AG04450 (cell line): ENCODE measurements at regions of chr5 and their contacts with region 1.

Region 1: DNA sequence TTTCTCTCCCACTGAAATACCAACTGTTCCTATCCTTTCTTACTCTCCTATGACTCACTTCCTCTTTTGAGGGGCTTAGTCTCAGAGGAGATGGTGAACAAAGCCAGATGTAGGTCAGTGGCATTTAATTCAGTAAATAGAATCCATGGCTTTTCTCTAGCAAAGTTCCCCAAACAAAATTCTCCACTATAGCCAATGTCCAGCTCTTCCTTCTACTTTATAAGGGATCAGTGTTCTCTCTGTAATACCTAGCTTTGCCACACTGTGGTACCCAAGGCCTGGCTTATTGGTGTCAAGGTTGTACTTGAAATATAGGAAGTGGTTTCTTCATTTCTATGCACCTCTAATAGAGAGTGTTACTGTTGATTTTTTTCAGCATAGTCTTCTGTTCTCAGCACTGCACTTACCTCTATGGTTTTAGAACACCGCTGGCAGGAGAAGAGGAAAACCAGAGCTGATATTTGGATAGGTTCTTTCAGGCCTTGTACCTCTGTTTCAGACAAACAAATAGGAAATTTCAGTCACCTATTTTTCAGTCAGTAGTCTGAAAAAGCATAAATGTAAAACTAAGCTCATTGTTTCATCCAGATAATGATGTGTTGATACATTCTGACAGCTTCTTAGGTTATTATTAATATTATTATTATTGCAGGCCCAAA is 40.6 kb upstream of the ITGA2 start:
- DNase-seq: peak; percentile 69
- H3K4me3 ChIP-seq: no peak overlapping the region
- H3K27ac ChIP-seq: no peak overlapping the region
- H3K27me3 ChIP-seq: no peaks in the 10 kb centered on the region
- CTCF ChIP-seq: peak; percentile 75

Region 2: DNA sequence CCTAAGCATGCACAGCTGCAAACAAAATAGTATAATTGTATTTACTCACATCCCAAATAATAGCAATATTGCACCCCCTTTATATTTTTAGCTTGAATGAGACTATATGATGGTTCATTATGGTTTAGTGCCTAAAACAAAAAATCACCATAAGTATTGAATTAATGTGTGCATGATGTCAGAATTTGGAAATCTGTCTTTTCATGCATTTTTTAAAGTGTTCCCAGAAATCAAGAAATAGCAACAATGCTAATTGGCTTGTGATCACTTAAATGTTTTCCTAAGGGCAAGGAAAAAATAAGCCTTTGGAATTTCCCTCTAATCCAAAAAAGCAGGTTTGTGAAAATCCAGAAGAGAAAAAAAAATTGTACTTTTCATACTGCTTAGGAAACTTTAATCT is 10.3 kb before region 1 on chr5:
- CTCF ChIA-PET with region 1: interaction called, 11 read pairs
- POLR2A ChIA-PET with region 1: no interaction called
- DNase-seq: no peak
- H3K4me3 ChIP-seq: no peak overlapping the region
- H3K27ac ChIP-seq: no peak overlapping the region
- H3K27me3 ChIP-seq: no peaks in the 10 kb centered on the region
- CTCF ChIP-seq: no peak

Region 3: GRCh38 chr5:52989781-52990527 is 41.4 kb after region 1 on chr5:
- CTCF ChIA-PET with region 1: interaction called, 23 read pairs
- POLR2A ChIA-PET with region 1: no interaction called
- DNase-seq: no peak
- H3K4me3 ChIP-seq: peak overlapping the region; percentile 86
- H3K27ac ChIP-seq: no peak overlapping the region
- H3K27me3 ChIP-seq: no peaks in the 10 kb centered on the region
- CTCF ChIP-seq: peak; percentile 37

Region 4: GRCh38 chr5:53041071-53041692 is 92.6 kb after region 1 on chr5:
- CTCF ChIA-PET with region 1: interaction called, 15 read pairs
- POLR2A ChIA-PET with region 1: interaction called, 6 read pairs
- DNase-seq: no peak
- H3K4me3 ChIP-seq: 0 out of 2 replicates have a peak overlapping the region, but pooled peaks have one; percentile 14
- H3K27ac ChIP-seq: no peak overlapping the region
- H3K27me3 ChIP-seq: no peaks in the 10 kb centered on the region
- CTCF ChIP-seq: no peak

Region 5: DNA sequence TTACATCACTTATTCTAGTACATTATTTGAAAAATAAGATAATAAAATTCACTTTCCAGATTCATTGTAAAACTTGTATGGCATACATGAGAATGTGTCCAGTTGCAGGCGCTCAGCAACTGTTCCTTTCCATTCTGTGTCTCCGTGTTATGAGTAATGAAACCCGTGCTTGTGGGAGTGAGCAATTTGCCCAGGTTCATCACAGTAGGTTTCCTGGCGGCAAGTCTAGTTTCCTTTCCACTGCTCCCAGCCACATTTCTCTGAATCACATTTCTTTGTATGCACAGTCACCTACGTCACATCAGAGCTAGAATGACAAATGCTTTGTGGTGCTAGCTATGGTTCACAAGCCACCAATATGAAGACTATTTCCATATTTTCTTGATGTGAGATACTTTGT is 121.1 kb after region 1 on chr5:
- CTCF ChIA-PET with region 1: interaction called, 31 read pairs
- POLR2A ChIA-PET with region 1: no interaction called
- DNase-seq: no peak
- H3K4me3 ChIP-seq: no peak overlapping the region
- H3K27ac ChIP-seq: no peak overlapping the region
- H3K27me3 ChIP-seq: no peaks in the 10 kb centered on the region
- CTCF ChIP-seq: no peak

Region 6: GRCh38 chr5:53095931-53096525 is 147.5 kb after region 1 on chr5:
- CTCF ChIA-PET with region 1: interaction called, 148 read pairs
- POLR2A ChIA-PET with region 1: no interaction called
- DNase-seq: peak; percentile 41
- H3K4me3 ChIP-seq: no peak overlapping the region
- H3K27ac ChIP-seq: no peak overlapping the region
- H3K27me3 ChIP-seq: no peaks in the 10 kb centered on the region
- CTCF ChIP-seq: peak; percentile 81

Region 7: DNA sequence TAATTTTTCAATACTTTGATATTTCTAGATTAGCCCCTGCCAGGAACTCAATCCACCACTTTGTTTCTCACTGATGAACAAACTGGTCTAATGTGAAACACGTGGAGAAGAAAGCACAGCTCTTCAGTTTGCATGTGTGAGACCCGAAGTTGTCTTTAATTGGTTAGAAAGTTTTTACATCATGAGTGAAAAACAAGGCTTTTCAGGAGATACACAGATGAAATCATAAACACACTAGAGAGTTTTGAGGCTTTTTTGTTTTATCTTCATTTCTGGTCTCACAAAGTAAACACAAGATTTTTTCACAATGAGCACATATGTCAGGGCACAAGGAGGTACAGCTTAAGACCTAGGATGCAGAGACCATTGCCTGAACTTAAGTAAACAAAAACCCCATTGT is 245.5 kb after region 1 on chr5:
- CTCF ChIA-PET with region 1: no interaction called
- POLR2A ChIA-PET with region 1: no interaction called
- DNase-seq: no peak
- H3K4me3 ChIP-seq: no peak overlapping the region
- H3K27ac ChIP-seq: no peak overlapping the region
- H3K27me3 ChIP-seq: no peaks in the 10 kb centered on the region
- CTCF ChIP-seq: no peak